Right ventricle myocardium superior (tissue), 1 donor: ENCODE measurements at regions of chr2 and their contacts with region 1.

Region 1: GRCh38 chr2:42494355-42495233 is 812 bp upstream of the KCNG3 start:
- DNase-seq: peak; percentile 65
- ATAC-seq: peak; percentile 82

Region 2: DNA sequence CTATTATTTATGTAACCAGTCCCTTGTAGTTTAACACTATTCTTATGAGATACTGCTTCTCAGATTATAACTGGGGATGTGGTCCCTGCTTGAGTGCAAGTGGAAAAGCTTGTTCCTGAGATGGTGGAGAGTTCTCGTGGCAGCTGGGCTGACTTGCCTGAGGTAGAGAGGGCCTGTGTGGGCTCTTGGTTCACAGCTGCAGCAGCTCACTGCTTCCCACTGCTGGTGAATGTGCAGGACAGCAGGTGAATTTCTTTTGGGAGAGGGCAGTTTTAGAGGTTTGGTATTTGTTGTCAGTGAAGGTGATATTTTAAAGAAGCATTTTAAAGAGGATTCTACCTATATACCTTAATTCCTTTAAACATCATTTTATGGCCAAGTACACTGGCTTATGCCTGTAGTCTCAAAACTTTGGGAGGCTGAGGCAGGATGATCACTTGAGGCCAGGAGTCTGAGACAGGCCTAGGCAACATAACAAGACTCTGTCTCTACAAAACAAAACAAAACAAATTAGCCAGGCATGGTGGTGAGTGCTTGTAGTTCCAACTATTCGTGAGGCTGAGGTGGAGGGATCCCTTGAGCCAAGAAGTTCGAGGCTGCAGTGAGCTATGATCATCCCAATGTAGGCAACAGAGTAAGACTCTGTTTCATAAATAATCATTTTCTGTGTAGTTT is 168.6 kb after region 1 on chr2:
- intact Hi-C with region 1: loop called (anchors 2 kb)
- DNase-seq: peak; percentile 58
- ATAC-seq: peak; percentile 95

Region 3: DNA sequence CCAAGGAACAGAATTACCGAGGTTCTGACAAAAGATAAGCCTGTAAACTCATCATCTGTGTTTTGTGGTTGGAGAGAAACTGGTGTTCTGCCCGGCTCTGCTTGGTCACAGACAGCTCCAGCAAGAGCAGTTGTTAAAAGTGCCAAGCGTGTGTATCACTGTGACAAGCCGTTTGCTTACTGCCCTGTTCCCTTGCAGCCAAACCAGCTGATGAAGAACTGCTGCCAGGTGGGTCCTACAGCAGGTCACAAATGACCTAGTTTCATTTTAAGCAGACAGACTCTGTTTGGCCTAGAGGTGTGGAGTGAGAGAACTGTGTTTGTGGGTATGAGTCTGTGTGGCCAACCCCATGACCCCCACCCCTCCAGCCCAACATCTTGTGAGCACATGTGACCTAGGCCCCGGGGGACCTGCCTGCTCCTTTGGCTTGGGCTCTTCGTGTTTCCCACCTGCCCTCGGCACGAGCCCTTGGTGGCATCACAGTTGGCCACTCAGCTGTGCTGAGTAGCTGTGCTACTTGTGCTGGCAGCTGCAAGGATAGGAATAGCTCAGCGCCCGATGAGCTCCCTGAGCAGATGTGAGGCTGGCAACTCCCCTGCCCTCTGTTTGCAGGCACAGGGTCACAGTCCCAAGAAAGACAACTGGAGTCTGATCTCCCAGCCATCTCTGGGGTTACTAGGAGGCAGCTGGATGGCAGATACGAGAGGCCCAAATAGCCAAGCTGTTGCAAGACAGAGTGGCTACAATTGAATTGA is 259.6 kb after region 1 on chr2:
- intact Hi-C with region 1: no loop called
- DNase-seq: no peak
- ATAC-seq: peak; percentile 78